ENCODE measurements at regions of chr2 and their contacts with region 1.

Region 1: GRCh38 chr2:162244541-162245031 is 1.3 kb upstream of the FAP start:
- DNase-seq: peak; percentile 93
- H3K4me3 Mint-ChIP-seq: peak overlapping the region; percentile 60
- H3K27ac Mint-ChIP-seq: peak overlapping the region; percentile 92
- H3K4me1 Mint-ChIP-seq: peaks cover 47% of the 10 kb centered on the region
- H3K27me3 Mint-ChIP-seq: no peaks in the 10 kb centered on the region
- CTCF ChIP-seq: no peak

Region 2: GRCh38 chr2:162174746-162175145 is 69.8 kb before region 1 on chr2:
- CTCF ChIA-PET with region 1: no interaction called
- POLR2A ChIA-PET with region 1: no interaction called
- intact Hi-C with region 1: no loop called
- DNase-seq: no peak
- H3K4me3 Mint-ChIP-seq: no peak overlapping the region
- H3K27ac Mint-ChIP-seq: no peak overlapping the region
- H3K4me1 Mint-ChIP-seq: no peaks in the 10 kb centered on the region
- H3K27me3 Mint-ChIP-seq: no peaks in the 10 kb centered on the region
- CTCF ChIP-seq: no peak

Region 3: GRCh38 chr2:162233197-162233596 is 11.4 kb before region 1 on chr2:
- CTCF ChIA-PET with region 1: interaction called, 5 read pairs
- POLR2A ChIA-PET with region 1: interaction called, 13 read pairs
- intact Hi-C with region 1: no loop called
- DNase-seq: peak; percentile 85
- H3K4me3 Mint-ChIP-seq: peak overlapping the region; percentile 4
- H3K27ac Mint-ChIP-seq: peak overlapping the region; percentile 84
- H3K4me1 Mint-ChIP-seq: peaks cover 21% of the 10 kb centered on the region
- H3K27me3 Mint-ChIP-seq: no peaks in the 10 kb centered on the region
- CTCF ChIP-seq: no peak

Region 4: GRCh38 chr2:162261032-162261945 is 16.7 kb after region 1 on chr2:
- CTCF ChIA-PET with region 1: interaction called, 3 read pairs
- POLR2A ChIA-PET with region 1: interaction called, 12 read pairs
- intact Hi-C with region 1: loop called (anchors 1 kb)
- DNase-seq: peak; percentile 65
- H3K4me3 Mint-ChIP-seq: peak overlapping the region; percentile 30
- H3K27ac Mint-ChIP-seq: peak overlapping the region; percentile 69
- H3K4me1 Mint-ChIP-seq: peaks cover 35% of the 10 kb centered on the region
- H3K27me3 Mint-ChIP-seq: no peaks in the 10 kb centered on the region
- CTCF ChIP-seq: no peak

Region 5: GRCh38 chr2:162318328-162319180 is 74.0 kb after region 1 on chr2 and contains the start of gene IFIH1:
- CTCF ChIA-PET with region 1: no interaction called
- POLR2A ChIA-PET with region 1: interaction called, 10 read pairs
- intact Hi-C with region 1: no loop called
- DNase-seq: peak; percentile 94
- H3K4me3 Mint-ChIP-seq: peak within 1 kb of the TSS; percentile 86
- H3K27ac Mint-ChIP-seq: peak within 1 kb of the TSS; percentile 99
- H3K4me1 Mint-ChIP-seq: peaks cover 19% of the 10 kb centered on the region
- H3K27me3 Mint-ChIP-seq: no peaks in the 10 kb centered on the region
- CTCF ChIP-seq: peak; percentile 18
- total RNA-seq, gene IFIH1: 4.5 and 7.2 TPM in 2 replicates